Endothelial cell of umbilical vein (primary cell): ENCODE measurements at regions of chr2 and their contacts with region 1.

Region 1: GRCh38 chr2:67397143-67397986 is at the start of gene ETAA1:
- DNase-seq: peak; percentile 88
- H3K4me3 ChIP-seq: peak within 1 kb of the TSS; percentile 89 to 93 (median 90)
- H3K27ac ChIP-seq: peak within 1 kb of the TSS; percentile 83
- H3K4me1 ChIP-seq: peaks cover 65% of the 10 kb centered on the region
- H3K27me3 ChIP-seq: no peaks in the 10 kb centered on the region
- CTCF ChIP-seq: no peak
- POLR2A ChIP-seq: peak; percentile 70
- total RNA-seq, gene ETAA1: 15.9 and 17.5 TPM in 2 replicates

Region 2: DNA sequence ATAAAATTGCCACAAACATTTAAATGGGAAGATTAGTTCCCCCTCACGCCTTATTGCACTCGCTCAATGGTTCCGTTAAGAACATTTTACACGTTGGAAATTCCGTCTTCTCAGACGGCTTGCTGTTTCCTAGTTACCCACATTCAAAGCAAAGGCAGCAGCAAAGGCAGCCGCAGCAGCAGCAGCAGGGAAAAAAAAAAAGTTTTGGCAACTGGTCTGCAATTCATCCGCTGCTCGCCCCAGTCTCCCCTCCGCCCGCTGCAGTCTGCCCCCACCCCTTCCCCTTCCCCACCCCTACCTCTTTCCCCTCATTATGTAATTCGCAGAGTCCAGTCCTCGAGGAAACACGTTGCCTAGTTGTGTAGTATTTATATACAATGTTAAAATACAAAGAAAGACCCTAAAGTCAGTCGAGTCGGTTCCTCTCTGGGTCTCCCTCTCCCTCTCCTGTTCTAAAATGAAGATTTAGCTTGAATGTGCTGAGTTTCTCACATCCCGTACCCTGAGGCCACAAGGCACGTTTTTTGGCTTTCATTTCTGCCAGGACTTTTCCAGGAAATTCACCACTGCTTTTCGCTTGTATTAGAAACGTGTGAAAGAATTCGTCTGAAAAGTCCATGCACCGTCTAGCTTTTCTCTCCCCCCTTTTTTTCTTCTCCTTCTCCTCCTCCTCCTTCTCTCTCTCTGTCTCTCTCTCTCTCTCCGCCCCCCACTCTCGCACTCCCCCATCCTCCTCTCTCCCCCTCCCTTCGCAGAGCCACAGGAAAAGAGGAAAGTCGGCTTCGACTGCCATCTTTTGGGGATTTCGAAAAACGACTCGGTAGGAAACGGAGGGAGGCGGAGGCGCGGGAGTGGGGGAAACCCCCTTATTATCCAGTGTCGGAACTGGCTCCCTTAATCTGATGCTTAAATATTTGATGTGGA is 822.4 kb before region 1 on chr2:
- CTCF ChIA-PET with region 1: no interaction called
- POLR2A ChIA-PET with region 1: no interaction called
- dilution Hi-C with region 1: no loop called
- intact Hi-C with region 1: loop called (anchors 5 kb)
- DNase-seq: peak; percentile 81
- H3K4me3 ChIP-seq: peak overlapping the region; percentile 56 to 92 (median 85)
- H3K27ac ChIP-seq: peak overlapping the region; percentile 74
- H3K4me1 ChIP-seq: peaks cover 18% of the 10 kb centered on the region
- H3K27me3 ChIP-seq: peaks cover 32 to 38% of the 10 kb centered on the region in 2 experiments
- CTCF ChIP-seq: peak; percentile 45 to 60
- POLR2A ChIP-seq: no peak

Region 3: GRCh38 chr2:67290451-67291290 is 106.7 kb before region 1 on chr2:
- CTCF ChIA-PET with region 1: no interaction called
- POLR2A ChIA-PET with region 1: no interaction called
- dilution Hi-C with region 1: no loop called
- intact Hi-C with region 1: loop called (anchors 5 kb)
- DNase-seq: peak; percentile 64
- H3K4me3 ChIP-seq: no peak overlapping the region
- H3K27ac ChIP-seq: peak overlapping the region; percentile 52
- H3K4me1 ChIP-seq: peaks cover 9% of the 10 kb centered on the region
- H3K27me3 ChIP-seq: no peaks in the 10 kb centered on the region
- CTCF ChIP-seq: no peak
- POLR2A ChIP-seq: no peak

Region 4: DNA sequence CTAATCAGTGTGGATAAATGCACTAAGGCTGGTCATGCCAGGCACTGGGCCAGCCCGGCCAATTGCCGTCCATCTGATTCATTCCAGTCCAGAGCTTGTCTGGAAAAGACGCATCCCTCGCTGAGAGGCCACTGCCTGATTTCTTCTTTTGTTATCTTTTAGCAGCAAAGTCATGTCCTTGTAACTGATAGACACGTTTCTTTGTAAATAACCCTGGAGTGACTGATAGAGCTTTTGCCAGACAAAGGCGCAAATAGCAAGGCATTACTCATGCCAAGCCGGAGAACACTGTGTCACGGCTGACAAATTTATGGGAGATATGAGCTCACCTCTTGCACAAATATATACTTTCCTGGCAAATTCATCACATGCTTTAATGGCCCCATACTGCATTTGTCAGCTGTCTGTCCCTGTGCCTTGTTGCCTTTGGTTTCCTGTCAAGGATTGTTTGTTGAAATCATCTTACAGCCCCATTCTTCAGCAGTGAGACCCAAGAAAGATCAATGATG is 164.1 kb after region 1 on chr2:
- CTCF ChIA-PET with region 1: no interaction called
- POLR2A ChIA-PET with region 1: no interaction called
- dilution Hi-C with region 1: no loop called
- intact Hi-C with region 1: loop called (anchors 2 kb)
- DNase-seq: peak; percentile 95
- H3K4me3 ChIP-seq: peak overlapping the region in 1 of 3 experiments; percentile 8
- H3K27ac ChIP-seq: peak overlapping the region; percentile 92
- H3K4me1 ChIP-seq: peaks cover 32% of the 10 kb centered on the region
- H3K27me3 ChIP-seq: no peaks in the 10 kb centered on the region
- CTCF ChIP-seq: no peak
- POLR2A ChIP-seq: peak; percentile 42

Region 5: DNA sequence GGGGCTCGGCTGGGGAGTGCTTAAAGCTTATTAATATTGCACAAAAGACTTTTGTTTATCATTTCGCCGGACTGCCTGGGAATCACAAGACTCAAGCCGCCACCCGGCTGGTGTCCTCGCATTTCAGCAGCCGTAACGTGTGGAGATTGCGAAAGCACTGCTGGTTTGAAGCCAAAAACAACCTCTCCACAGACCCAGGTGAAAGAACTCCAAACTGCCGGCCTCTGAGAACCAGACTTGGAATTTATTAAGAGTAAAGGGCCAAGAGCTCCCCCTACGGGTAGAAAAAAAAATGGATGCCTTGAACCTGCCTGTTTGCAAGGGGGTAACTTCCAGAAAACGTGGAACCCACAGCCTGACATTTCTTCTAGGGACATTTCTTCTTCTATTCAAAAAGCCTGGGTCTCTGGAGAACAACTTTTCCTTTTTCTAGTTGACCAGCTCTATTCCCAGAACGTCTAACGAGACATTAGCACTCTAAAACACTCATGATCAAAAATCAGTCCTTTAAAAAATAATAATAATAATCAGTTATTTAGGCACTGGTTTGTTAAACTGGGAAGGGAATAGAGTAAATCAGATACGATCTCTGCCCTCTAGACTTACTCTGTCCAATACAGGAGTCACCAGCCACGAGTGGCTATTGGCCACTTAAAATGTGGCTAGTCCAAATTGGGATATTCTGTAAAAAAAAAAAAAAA is 449.2 kb after region 1 on chr2:
- CTCF ChIA-PET with region 1: interaction called, 4 read pairs
- POLR2A ChIA-PET with region 1: no interaction called
- dilution Hi-C with region 1: no loop called
- intact Hi-C with region 1: loop called (anchors 5 kb)
- DNase-seq: peak; percentile 96
- H3K4me3 ChIP-seq: peak overlapping the region in 1 of 3 experiments; percentile 14
- H3K27ac ChIP-seq: peak overlapping the region; percentile 44
- H3K4me1 ChIP-seq: peaks cover 6% of the 10 kb centered on the region
- H3K27me3 ChIP-seq: no peaks in the 10 kb centered on the region
- CTCF ChIP-seq: peak; percentile 68 to 71
- POLR2A ChIP-seq: no peak